Cardiac septum (tissue), 1 donor: ENCODE measurements at regions of chr11 and their contacts with region 1.

Region 1: DNA sequence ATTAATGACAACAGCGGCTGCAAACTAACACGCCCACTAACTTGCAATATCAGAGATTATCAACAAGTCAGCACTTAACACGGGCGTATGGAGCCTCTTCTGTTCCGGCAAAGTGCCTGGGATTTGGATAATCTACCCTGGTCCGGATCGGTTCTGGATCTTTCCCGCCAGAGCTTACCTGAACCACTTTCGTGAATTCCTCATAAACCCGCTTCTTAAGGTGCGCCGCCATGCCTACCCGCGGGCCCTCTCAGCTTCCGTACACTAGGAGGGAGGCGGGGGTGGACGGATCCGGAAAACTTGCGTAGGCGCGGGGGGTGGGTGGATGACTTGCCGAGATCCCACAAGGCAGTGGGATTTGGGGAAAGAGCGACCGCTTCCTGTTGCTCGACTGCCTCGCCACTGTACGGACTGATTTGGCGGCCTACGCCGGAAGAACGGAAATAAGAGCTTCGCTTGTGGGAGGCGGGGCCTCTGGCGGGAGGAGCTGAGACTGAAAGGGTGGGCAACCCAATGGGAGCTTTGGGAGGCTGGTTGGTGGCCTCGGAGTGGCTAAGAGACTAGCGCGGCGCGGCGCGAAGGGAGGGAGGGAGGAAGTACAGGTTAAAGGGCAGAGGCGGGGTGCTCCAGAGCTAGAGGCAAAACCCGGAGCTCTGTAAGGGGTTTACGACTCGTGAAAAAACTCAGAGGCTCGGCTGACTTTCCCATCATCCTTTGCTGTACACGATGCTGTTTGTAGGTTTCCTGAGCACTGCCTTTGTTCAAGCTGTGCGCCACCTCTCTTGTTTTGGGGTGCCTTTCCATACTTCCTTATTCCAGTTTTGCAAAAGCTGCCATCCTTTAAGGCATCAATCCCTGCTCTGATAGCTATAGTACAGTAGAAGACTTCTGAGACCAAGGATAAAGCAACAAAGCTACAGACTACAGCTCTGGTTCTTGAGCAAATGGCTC is at the start of gene INTS4:
- DNase-seq: peak; percentile 99
- total RNA-seq, gene INTS4: 19.3 TPM

Region 2: GRCh38 chr11:77637345-77638165 is 357.1 kb before region 1 on chr11 and contains the start of gene CLNS1A:
- intact Hi-C with region 1: loop called (anchors 10 kb)
- DNase-seq: peak; percentile 94
- total RNA-seq, gene CLNS1A: 71.7 TPM

Region 3: DNA sequence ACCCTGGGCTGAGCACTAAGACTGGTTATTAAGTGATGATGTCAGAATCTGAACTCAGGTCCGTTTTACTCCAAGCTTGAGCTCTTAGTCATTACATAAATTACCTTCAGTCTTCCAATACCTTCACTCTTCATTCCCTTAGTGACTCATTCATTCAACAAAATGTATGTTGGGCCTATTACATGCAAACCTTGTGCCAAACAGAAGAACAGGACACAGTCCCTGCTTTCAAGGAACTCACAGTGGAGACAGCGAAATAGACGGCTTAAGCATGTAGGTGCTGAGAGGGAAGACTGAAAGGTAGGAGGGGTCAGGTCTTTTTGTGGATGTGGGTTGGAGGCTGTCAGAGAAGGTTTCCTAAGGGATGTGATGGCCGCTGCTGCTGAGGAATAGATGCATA is 25.1 kb after region 1 on chr11:
- intact Hi-C with region 1: no loop called
- DNase-seq: no peak